Activated CD4-positive, alpha-beta T cell treated with anti-CD3 and anti-CD28 coated beads for 36 hours (primary cell): ENCODE measurements at regions of chr17 and their contacts with region 1.

Region 1: GRCh38 chr17:7045909-7046724 is 2.2 kb upstream of the SLC16A11 start:
- DNase-seq: peak; percentile 66
- ATAC-seq: peak; percentile 34
- H3K4me3 Mint-ChIP-seq: peak overlapping the region; percentile 68
- H3K27ac Mint-ChIP-seq: peak overlapping the region; percentile 59
- H3K4me1 Mint-ChIP-seq: peaks cover 37% of the 10 kb centered on the region
- H3K27me3 Mint-ChIP-seq: peaks cover 3% of the 10 kb centered on the region

Region 2: DNA sequence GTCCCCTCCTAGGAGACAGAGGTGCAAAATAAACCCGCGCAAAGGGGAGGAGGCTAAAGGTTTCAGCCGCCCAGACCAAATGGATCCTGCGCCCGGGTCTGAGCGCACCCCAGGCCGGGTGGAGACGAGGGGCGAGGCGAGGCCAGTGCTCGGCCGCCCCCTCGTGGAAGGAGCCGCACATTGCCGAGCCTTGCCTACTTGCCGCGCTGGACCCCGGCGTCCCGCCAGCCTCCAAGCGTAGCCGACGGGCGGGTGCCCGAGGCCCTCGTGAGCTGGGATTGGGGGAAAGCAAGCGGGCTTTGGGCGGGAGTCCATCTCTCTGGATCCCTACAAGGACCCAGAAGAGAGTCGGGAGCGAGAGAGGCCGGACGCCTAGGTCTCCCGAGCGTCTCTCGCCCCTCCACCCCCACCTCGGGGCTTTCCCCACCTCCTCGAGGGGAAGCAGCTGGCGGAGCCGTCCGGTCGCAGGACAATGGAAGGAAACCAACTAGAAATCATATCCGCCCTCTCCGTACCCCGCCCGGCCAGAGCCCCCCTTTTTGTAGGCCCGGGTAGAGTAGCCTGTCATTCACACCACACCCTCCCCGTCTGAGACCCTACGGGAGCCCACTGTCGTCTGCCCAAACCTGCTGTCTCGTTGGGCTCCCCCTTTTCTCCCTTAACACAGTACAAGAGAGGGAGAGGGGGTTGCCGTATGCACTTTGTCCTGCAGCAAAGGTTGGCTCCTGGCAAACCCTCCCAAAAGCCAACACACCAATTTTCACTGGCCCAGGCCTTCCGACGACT is 23.9 kb before region 1 on chr17:
- CTCF ChIA-PET with region 1: interaction called, 23 read pairs
- POLR2A ChIA-PET with region 1: no interaction called
- intact Hi-C with region 1: no loop called
- DNase-seq: peak; percentile 89
- ATAC-seq: peak; percentile 79
- H3K4me3 Mint-ChIP-seq: peak overlapping the region; percentile 44
- H3K27ac Mint-ChIP-seq: peak overlapping the region; percentile 55
- H3K4me1 Mint-ChIP-seq: peaks cover 43% of the 10 kb centered on the region
- H3K27me3 Mint-ChIP-seq: peaks cover 12% of the 10 kb centered on the region

Region 3: GRCh38 chr17:7060165-7060891 is 14.2 kb after region 1 on chr17:
- CTCF ChIA-PET with region 1: interaction called, 22 read pairs
- POLR2A ChIA-PET with region 1: interaction called, 3 read pairs
- intact Hi-C with region 1: loop called in 1 of 2 experiments (anchors 1 kb)
- DNase-seq: peak; percentile 78
- ATAC-seq: peak; percentile 87
- H3K4me3 Mint-ChIP-seq: peak overlapping the region; percentile 49
- H3K27ac Mint-ChIP-seq: peak overlapping the region; percentile 88
- H3K4me1 Mint-ChIP-seq: peaks cover 26% of the 10 kb centered on the region
- H3K27me3 Mint-ChIP-seq: no peaks in the 10 kb centered on the region

Region 4: GRCh38 chr17:7141824-7142223 is 95.7 kb after region 1 on chr17:
- CTCF ChIA-PET with region 1: interaction called, 136 read pairs
- POLR2A ChIA-PET with region 1: no interaction called
- intact Hi-C with region 1: no loop called
- DNase-seq: no peak
- ATAC-seq: no peak
- H3K4me3 Mint-ChIP-seq: no peak overlapping the region
- H3K27ac Mint-ChIP-seq: no peak overlapping the region
- H3K4me1 Mint-ChIP-seq: no peaks in the 10 kb centered on the region
- H3K27me3 Mint-ChIP-seq: no peaks in the 10 kb centered on the region

Region 5: GRCh38 chr17:7204828-7205461 is 158.8 kb after region 1 on chr17:
- CTCF ChIA-PET with region 1: interaction called, 3 read pairs
- POLR2A ChIA-PET with region 1: no interaction called
- intact Hi-C with region 1: loop called in 1 of 2 experiments (anchors 1 kb)
- DNase-seq: peak; percentile 95
- ATAC-seq: peak; percentile 92
- H3K4me3 Mint-ChIP-seq: peak overlapping the region; percentile 75
- H3K27ac Mint-ChIP-seq: peak overlapping the region; percentile 83
- H3K4me1 Mint-ChIP-seq: peaks cover 24% of the 10 kb centered on the region
- H3K27me3 Mint-ChIP-seq: no peaks in the 10 kb centered on the region

Region 6: GRCh38 chr17:7239091-7240027 is 193.2 kb after region 1 on chr17 and contains the start of gene PHF23:
- CTCF ChIA-PET with region 1: interaction called, 8 read pairs
- POLR2A ChIA-PET with region 1: no interaction called
- intact Hi-C with region 1: loop called in 1 of 2 experiments (anchors 1 kb)
- DNase-seq: peak; percentile 99
- ATAC-seq: peak; percentile 74
- H3K4me3 Mint-ChIP-seq: peak within 1 kb of the TSS; percentile 97
- H3K27ac Mint-ChIP-seq: peak within 1 kb of the TSS; percentile 93
- H3K4me1 Mint-ChIP-seq: peaks cover 61% of the 10 kb centered on the region
- H3K27me3 Mint-ChIP-seq: no peaks in the 10 kb centered on the region
- total RNA-seq, gene PHF23: 23.6 to 35.2 TPM